RWPE1 (cell line): ENCODE measurements at regions of chr20 and their contacts with region 1.

Region 1: DNA sequence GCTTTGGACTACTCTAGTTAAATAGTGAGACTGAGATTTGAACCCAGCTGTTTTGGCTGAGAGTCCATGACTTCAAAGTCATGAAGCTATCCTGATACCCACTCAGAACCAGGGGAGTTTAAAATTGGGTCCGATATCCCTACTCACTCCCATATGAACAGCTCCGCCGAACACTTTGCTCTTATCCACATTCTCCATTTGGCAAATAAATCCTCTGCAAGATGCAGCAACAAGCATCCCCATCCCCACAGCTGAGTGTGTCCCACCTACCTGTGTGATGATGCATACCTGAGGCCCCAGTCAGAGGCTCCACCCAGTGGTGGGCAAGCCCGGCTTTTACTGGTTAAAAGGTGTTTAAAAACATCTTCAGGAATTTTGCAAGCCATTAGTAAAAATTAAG is 108.3 kb upstream of the SLC24A3 start:
- DNase-seq: no peak
- H3K27ac ChIP-seq: no peak overlapping the region
- CTCF ChIP-seq: no peak

Region 2: GRCh38 chr20:19121469-19121868 is 17.3 kb after region 1 on chr20:
- CTCF ChIA-PET with region 1: no interaction called
- POLR2A ChIA-PET with region 1: no interaction called
- DNase-seq: no peak
- H3K27ac ChIP-seq: no peak overlapping the region
- CTCF ChIP-seq: no peak

Region 3: DNA sequence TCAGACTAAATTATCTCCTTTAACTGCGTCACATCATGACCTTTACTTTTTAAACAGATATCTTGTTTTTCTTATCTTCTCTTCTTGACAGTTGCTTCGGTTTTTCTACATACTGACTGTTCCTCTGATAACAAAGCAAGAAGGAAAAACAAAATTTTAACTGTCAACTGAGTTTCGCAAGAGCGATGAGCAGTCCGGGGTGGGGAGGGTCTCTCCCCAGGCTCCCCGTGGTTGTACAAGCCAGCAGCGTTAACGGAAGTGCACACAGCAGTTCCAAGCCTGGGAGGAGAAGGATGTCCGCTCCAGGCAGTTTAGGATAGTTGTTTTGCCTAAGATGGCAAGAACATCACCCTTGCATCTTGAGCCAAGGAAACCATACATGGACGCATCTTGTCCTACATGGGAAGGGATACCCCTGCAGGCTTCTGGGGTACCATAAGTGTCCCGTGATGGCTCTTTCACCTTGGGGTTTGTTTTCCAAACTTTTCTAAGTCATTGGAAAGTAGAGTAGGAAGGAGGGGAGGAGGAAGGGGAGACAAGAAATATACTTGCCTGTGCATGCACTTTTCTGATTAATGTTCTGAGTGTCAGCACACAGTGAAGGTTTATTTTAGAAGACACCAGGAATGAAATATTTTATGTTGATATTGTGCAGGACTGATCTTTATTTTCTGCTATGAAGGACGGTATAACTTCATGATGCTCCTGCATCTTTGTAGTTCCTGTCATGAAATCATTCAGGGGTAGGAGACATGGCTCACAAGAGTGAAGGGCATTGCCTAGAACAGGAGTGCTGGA is 129.0 kb after region 1 on chr20:
- CTCF ChIA-PET with region 1: interaction called, 10 read pairs
- POLR2A ChIA-PET with region 1: no interaction called
- DNase-seq: no peak
- H3K27ac ChIP-seq: no peak overlapping the region
- CTCF ChIP-seq: no peak